Left cardiac atrium (tissue), 4 donors: ENCODE measurements at regions of chr15 and their contacts with region 1.

Region 1: DNA sequence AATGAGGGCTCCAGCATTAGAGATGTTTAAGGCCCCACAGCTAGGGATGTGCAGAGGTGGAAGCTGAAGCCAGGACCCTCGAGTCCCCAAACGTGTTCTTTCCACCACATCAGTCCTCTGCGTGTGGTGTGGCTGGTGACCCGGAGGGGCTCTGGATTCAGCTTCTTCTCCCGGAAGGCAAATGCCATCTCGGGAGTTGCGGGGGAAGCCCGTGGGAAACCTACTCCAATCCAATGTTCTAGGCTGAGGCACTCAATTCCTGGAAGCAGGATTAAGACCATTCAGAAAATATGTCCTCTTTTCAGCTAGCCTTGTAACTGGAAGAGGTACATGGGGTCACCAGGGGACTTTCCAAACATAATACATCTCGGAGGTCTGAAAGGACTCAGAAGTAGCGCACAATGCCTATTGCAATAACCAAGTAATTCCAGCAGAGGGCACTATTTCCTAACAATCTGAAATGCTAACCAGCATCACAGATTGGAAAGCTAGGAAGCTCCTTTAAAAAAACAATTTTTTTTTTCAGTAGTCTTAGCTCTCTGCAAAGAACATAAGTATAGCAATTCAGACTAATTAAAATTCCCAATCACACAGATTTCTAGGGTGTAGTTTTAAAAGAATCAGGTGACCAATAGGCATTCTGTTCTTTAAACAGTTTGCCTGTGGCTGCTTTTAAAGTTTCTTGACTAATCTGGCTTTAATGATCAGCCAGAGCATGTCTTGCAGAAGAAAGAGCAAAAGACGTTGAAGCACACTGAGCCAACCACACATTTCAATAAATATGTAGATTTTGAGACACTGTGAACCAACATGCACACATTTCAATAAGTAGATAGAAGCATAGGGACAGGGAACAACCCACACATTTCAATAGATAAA is 36.1 kb downstream of the BNC1 start:
- DNase-seq: no peak
- ATAC-seq: peak; percentile 57

Region 2: DNA sequence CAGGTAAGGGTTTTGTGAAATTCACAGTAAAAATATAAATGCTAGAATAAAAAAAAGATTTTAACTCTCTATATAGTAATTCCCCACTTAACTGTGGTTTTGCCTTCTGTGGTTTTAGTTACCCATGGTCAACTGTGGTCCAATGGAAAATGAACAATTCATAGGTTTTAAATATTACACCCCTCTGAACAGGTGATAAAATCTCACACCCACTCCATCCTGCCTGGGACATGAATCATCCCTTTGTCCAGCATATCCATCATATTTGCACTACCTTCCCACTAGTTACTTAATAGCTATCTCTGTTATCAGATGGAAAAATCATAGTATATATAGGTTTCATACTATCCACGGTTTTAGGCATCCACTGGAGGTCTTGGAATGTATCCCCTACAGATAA is 90.0 kb before region 1 on chr15:
- intact Hi-C with region 1: no loop called
- DNase-seq: no peak
- ATAC-seq: no peak

Region 3: GRCh38 chr15:83356501-83357399 is 108.4 kb after region 1 on chr15:
- intact Hi-C with region 1: no loop called
- DNase-seq: no peak
- ATAC-seq: no peak

Region 4: GRCh38 chr15:83380682-83381081 is 132.3 kb after region 1 on chr15:
- intact Hi-C with region 1: loop called (anchors 2 to 5 kb)
- DNase-seq: peak; percentile 31
- ATAC-seq: peak; percentile 62 to 71

Region 5: GRCh38 chr15:83436458-83437158 is 188.2 kb after region 1 on chr15:
- intact Hi-C with region 1: loop called (anchors 1 to 5 kb)
- DNase-seq: no peak
- ATAC-seq: peak; percentile 67 to 91

Region 6: GRCh38 chr15:83626171-83626802 is 377.9 kb after region 1 on chr15:
- intact Hi-C with region 1: no loop called
- DNase-seq: no peak
- ATAC-seq: no peak